PC-3 (cell line): ENCODE measurements at regions of chr1 and their contacts with region 1.

Region 1: DNA sequence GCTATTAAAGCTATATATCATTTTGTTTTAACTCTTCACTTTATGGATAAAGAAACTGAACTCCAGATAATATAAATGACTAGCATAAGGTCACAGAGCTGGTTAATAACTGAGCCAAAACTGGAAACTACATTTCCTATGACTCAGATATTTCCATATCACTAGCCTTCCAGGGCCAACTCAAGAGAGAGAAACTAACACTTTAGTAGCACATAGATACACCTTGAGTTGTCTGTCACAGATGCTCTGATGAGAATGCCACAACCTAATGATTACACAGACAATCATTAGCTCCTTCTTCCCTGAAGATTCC is 40.7 kb downstream of the NME7 start:
- DNase-seq: peak; percentile 63
- ATAC-seq: peak; percentile 93
- H3K4me3 ChIP-seq: no peak overlapping the region
- H3K27ac ChIP-seq: no peak overlapping the region
- H3K4me1 ChIP-seq: peaks cover 16% of the 10 kb centered on the region
- H3K27me3 ChIP-seq: no peaks in the 10 kb centered on the region
- CTCF ChIP-seq: no peak

Region 2: DNA sequence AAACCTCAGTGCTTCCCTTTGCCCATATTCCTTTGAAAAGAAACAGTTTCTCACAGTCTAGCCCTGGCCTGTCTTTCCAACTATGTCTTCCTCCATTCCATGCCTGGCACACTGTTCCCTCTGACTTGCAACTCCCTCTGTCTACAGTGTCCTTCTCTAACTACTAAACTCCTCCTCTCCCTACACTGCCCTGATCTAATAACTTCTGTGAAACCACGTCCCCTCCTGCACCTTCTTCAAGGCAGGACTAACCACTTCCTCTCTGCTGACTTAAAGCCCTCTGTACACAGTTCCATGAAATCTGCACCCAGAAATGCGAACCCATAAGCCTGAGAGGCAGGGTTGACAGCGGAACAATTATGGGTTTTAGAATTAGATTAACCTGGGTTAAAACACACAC is 282.6 kb before region 1 on chr1:
- CTCF ChIA-PET with region 1: no interaction called
- POLR2A ChIA-PET with region 1: no interaction called
- intact Hi-C with region 1: no loop called
- DNase-seq: peak; percentile 59
- ATAC-seq: peak; percentile 92
- H3K4me3 ChIP-seq: no peak overlapping the region
- H3K27ac ChIP-seq: no peak overlapping the region
- H3K4me1 ChIP-seq: peaks cover 11% of the 10 kb centered on the region
- H3K27me3 ChIP-seq: no peaks in the 10 kb centered on the region
- CTCF ChIP-seq: no peak

Region 3: GRCh38 chr1:169295425-169295824 is 31.5 kb before region 1 on chr1:
- CTCF ChIA-PET with region 1: no interaction called
- POLR2A ChIA-PET with region 1: no interaction called
- intact Hi-C with region 1: loop called (anchors 5 kb)
- DNase-seq: no peak
- ATAC-seq: no peak
- H3K4me3 ChIP-seq: no peak overlapping the region
- H3K27ac ChIP-seq: no peak overlapping the region
- H3K4me1 ChIP-seq: peaks cover 20% of the 10 kb centered on the region
- H3K27me3 ChIP-seq: no peaks in the 10 kb centered on the region
- CTCF ChIP-seq: no peak

Region 4: GRCh38 chr1:169753552-169753951 is 426.6 kb after region 1 on chr1:
- CTCF ChIA-PET with region 1: no interaction called
- POLR2A ChIA-PET with region 1: no interaction called
- intact Hi-C with region 1: no loop called
- DNase-seq: no peak
- ATAC-seq: 0 out of 2 replicates have a peak, but pooled peaks have one; percentile 20
- H3K4me3 ChIP-seq: no peak overlapping the region
- H3K27ac ChIP-seq: no peak overlapping the region
- H3K4me1 ChIP-seq: no peaks in the 10 kb centered on the region
- H3K27me3 ChIP-seq: no peaks in the 10 kb centered on the region
- CTCF ChIP-seq: 0 out of 2 replicates have a peak, but pooled peaks have one; percentile 8